Caco-2 (cell line): ENCODE measurements at regions of chr15 and their contacts with region 1.

Region 1: DNA sequence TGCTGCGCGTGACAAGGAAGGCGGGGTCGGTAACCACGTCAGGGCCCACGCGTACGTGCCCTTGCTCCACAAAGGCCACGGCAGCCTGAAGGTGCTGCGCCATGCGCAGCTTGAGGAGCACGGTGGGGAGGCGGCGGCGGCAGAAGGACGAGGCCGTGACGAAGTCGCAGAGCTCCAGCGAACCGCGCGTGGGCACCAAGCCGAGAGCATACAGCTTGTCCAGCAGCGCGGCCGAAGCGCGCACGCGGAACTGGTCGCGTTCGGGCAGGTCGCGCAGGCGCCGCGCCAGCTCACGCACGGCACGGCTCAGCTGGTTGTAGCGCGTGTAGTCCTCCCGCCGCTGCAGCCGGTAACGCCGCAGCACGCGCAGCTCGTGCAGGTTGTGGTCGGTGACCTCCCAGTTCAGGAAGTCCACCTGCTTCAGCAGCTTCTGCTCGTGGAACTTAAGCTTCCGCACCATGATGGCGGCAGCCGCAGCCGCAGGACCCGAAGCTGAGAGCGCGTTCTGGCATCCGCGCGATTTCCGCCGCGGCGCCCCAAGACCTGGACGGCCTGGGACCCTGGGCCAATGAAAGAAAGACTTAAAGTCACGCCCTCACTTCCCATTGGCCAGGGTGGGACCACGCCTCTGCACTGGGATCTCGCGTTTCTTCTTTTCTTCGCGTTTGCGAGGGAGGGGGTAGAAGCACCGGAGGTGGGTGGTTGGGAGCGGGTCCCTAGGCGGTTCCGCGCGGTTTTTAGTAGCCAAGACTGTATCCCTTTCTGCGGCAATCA is at the start of gene IMP3:
- DNase-seq: peak; percentile 95
- H3K4me3 ChIP-seq: peak within 1 kb of the TSS; percentile 66
- H3K4me3 Mint-ChIP-seq: peak within 1 kb of the TSS; percentile 87
- H3K27ac Mint-ChIP-seq: peak within 1 kb of the TSS; percentile 92
- H3K4me1 ChIP-seq: peaks cover 4% of the 10 kb centered on the region; the same call in 1 of the 2 replicates
- H3K4me1 Mint-ChIP-seq: no peaks in the 10 kb centered on the region
- H3K27me3 ChIP-seq: no peaks in the 10 kb centered on the region
- H3K27me3 Mint-ChIP-seq: no peaks in the 10 kb centered on the region
- CTCF ChIP-seq: no peak
- total RNA-seq, gene IMP3: 58.4 and 60.4 TPM in 2 replicates

Region 2: DNA sequence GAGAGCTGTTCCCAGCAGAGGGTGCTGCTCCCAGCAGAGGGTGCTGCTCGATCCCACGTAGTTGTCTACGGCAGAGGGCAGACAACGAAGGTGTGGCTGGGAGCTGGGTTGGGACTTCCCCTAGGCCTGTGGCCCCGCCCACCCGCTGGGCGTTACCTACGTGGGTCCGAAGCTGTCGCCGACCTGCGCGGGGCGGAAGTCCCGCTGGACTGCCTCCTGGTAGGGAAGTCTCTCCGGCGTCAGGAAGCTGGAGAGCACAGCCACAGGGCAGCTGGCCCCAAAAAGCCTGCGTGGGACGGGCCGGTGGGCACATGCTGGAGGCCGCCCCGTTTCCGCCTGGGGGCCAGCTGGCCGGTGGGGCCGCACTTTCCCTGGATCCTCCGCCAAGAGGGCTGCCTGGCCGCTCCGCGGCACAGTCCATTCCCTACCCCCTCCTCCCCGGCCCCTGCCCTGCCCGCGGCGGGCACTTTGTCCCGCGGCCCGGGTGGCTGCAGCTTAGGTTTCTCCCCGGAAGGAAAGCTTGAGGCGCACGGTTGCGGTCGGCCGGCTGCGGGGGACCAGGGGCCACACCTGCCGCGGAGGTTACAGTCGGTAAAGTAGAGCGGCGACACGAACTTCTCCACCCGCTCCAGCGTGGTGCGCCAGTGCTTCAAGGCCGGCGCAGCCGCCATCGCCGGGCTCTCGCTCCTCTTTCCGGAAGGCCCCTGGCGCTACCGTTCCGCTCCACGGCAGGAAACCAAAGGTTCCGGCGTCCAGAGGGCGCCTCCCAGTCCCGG is 271.8 kb before region 1 on chr15 and contains the start of gene MAN2C1:
- CTCF ChIA-PET with region 1: interaction called, 15 read pairs
- POLR2A ChIA-PET with region 1: interaction called, 12 read pairs
- intact Hi-C with region 1: loop called (anchors 1 kb)
- DNase-seq: peak; percentile 98
- H3K4me3 ChIP-seq: peak within 1 kb of the TSS; percentile 61
- H3K4me3 Mint-ChIP-seq: peak within 1 kb of the TSS; percentile 93
- H3K27ac Mint-ChIP-seq: peak within 1 kb of the TSS; percentile 93
- H3K4me1 ChIP-seq: peaks cover 19% of the 10 kb centered on the region
- H3K4me1 Mint-ChIP-seq: peaks cover 13% of the 10 kb centered on the region
- H3K27me3 ChIP-seq: no peaks in the 10 kb centered on the region
- H3K27me3 Mint-ChIP-seq: no peaks in the 10 kb centered on the region
- CTCF ChIP-seq: peak; percentile 53 to 92
- total RNA-seq, gene MAN2C1: 131 and 140 TPM in 2 replicates

Region 3: DNA sequence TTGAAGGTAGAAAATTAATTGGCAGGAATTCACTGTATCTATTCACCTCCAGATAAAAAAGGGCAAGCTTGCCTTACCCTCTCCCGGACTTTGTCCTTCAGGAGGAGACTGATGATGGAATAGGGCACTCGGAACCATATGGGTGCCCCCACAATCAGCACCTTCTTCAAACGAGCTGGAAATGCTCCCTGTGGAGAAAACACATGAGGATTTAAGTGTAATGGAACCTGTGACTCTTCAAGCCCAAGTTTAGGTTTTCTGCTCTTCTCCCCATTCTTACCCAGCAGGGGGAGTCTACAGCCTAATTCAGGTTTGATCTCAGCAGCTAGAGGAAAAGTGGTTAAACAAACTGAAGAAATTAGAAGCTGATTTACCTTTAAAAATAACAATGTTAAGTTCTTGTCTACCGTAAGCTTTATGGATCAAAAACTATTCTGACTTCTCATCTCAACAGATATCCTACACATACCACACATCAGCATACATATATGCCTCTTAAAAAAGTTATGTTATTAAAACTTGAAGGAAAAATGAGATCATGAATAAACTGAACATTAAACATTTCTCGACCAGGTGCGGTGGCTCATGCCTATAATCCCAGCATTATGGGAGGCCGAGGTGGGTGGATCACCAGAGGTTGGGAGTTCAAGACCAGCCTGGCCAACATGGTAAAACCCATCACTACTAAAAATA is 130.9 kb before region 1 on chr15:
- CTCF ChIA-PET with region 1: interaction called, 4 read pairs
- POLR2A ChIA-PET with region 1: no interaction called
- intact Hi-C with region 1: loop called (anchors 2 kb)
- DNase-seq: peak in 1 of 2 experiments; percentile 50
- H3K4me3 ChIP-seq: no peak overlapping the region
- H3K4me3 Mint-ChIP-seq: no peak overlapping the region
- H3K27ac Mint-ChIP-seq: no peak overlapping the region
- H3K4me1 ChIP-seq: no peaks in the 10 kb centered on the region
- H3K4me1 Mint-ChIP-seq: no peaks in the 10 kb centered on the region
- H3K27me3 ChIP-seq: no peaks in the 10 kb centered on the region
- H3K27me3 Mint-ChIP-seq: no peaks in the 10 kb centered on the region
- CTCF ChIP-seq: peak; percentile 51 to 73

Region 4: GRCh38 chr15:75578948-75579920 is 60.7 kb before region 1 on chr15 and contains the start of gene PTPN9:
- CTCF ChIA-PET with region 1: interaction called, 3 read pairs
- POLR2A ChIA-PET with region 1: interaction called, 5 read pairs
- intact Hi-C with region 1: loop called (anchors 5 kb)
- DNase-seq: peak; percentile 77 to 82
- H3K4me3 ChIP-seq: peak within 1 kb of the TSS; percentile 70
- H3K4me3 Mint-ChIP-seq: peak within 1 kb of the TSS; percentile 87
- H3K27ac Mint-ChIP-seq: peak within 1 kb of the TSS; percentile 93
- H3K4me1 ChIP-seq: peaks cover 11% of the 10 kb centered on the region
- H3K4me1 Mint-ChIP-seq: peaks cover 5% of the 10 kb centered on the region
- H3K27me3 ChIP-seq: no peaks in the 10 kb centered on the region
- H3K27me3 Mint-ChIP-seq: no peaks in the 10 kb centered on the region
- CTCF ChIP-seq: peak; percentile 32 to 72
- total RNA-seq, gene PTPN9: 25.4 and 27.7 TPM in 2 replicates

Region 5: DNA sequence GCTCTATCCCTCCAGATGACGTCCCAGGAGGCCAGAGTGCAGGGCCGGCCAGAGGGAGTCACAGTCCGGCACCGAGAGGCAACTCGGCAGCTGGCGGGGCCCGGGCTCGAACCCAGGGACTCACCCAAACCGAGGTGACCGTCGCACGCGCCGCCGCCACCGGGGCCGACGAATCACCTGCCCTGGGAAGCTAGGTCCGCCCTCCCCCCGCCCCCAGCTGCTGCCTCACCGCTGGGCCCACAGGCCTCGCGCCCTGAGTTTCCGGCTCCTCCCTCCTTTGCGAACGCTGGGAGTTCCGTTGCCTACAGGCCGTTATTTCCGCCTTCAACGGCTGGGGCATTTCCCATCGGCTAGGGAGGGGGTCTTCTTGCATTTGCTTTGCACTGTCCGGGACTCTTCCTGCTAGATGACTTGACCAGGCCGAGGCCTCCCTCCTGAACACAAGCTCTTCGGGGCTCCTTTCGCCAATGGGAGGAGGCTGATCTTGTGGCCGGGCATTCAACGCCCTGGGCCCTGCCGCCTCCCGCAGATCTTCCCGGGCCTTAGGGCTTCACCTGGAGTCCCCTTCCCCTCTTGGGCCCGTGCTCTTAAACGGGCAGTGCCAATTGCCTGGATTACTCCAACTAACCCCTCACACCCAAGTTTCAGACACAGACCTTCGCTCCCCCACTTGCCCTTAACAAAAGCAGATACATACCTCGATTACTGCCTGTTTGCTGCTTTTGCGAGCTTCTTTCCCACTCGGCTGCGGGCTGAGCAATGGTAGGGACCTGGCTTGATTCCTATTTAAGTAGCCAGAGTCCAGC is 14.2 kb before region 1 on chr15 and contains the start of gene SNUPN:
- CTCF ChIA-PET with region 1: interaction called, 4 read pairs
- POLR2A ChIA-PET with region 1: interaction called, 7 read pairs
- intact Hi-C with region 1: loop called (anchors 1 kb)
- DNase-seq: peak; percentile 84 to 88
- H3K4me3 ChIP-seq: peak within 1 kb of the TSS; percentile 85
- H3K4me3 Mint-ChIP-seq: peak within 1 kb of the TSS; percentile 79
- H3K27ac Mint-ChIP-seq: peak within 1 kb of the TSS; percentile 68
- H3K4me1 ChIP-seq: 0 out of 2 replicates have a peak, but pooled peaks cover 7% of the 10 kb centered on the region
- H3K4me1 Mint-ChIP-seq: no peaks in the 10 kb centered on the region
- H3K27me3 ChIP-seq: no peaks in the 10 kb centered on the region
- H3K27me3 Mint-ChIP-seq: no peaks in the 10 kb centered on the region
- CTCF ChIP-seq: no peak
- total RNA-seq, gene SNUPN: 10.6 and 12.5 TPM in 2 replicates

Region 6: GRCh38 chr15:75891895-75892294 is 252.0 kb after region 1 on chr15:
- CTCF ChIA-PET with region 1: no interaction called
- POLR2A ChIA-PET with region 1: no interaction called
- intact Hi-C with region 1: no loop called
- DNase-seq: no peak
- H3K4me3 ChIP-seq: no peak overlapping the region
- H3K4me3 Mint-ChIP-seq: no peak overlapping the region
- H3K27ac Mint-ChIP-seq: no peak overlapping the region
- H3K4me1 ChIP-seq: peaks cover 7% of the 10 kb centered on the region; the same call in 1 of the 2 replicates
- H3K4me1 Mint-ChIP-seq: peaks cover 17% of the 10 kb centered on the region
- H3K27me3 ChIP-seq: no peaks in the 10 kb centered on the region
- H3K27me3 Mint-ChIP-seq: no peaks in the 10 kb centered on the region
- CTCF ChIP-seq: no peak